ENCODE measurements at regions of chr18 and their contacts with region 1.

Region 1: GRCh38 chr18:59459369-59460079 is 100.5 kb upstream of the LMAN1 start:
- DNase-seq: no peak

Region 2: GRCh38 chr18:57975805-57976204 is 1483.7 kb before region 1 on chr18:
- intact Hi-C with region 1: loop called in 1 of 2 experiments (anchors 5 kb)
- DNase-seq: no peak

Region 3: DNA sequence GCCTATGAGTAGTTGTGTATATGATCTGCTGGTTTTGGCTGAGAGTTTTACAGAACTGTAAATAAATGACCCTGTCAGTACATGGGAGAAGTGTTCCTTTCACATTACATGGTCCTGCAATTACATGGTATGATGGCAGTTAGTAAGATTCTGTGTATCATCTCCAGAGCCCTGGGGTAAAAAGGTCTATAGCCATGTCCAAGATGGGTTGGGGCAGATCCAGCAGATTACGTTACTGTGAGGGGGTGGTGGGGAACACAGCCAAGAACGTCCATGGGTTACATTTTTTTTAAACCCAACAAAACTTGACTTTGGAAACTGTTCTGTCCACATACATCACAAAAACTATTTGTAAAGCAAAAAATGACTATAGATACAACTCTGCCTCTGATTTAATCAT is 36.3 kb before region 1 on chr18:
- intact Hi-C with region 1: no loop called
- DNase-seq: no peak

Region 4: GRCh38 chr18:59697236-59697932 is 237.9 kb after region 1 on chr18 and contains the start of gene CCBE1:
- intact Hi-C with region 1: loop called in 1 of 2 experiments (anchors 10 kb)
- DNase-seq: peak; percentile 85
- total RNA-seq, gene CCBE1: 2.1 to 3.0 TPM

Region 5: DNA sequence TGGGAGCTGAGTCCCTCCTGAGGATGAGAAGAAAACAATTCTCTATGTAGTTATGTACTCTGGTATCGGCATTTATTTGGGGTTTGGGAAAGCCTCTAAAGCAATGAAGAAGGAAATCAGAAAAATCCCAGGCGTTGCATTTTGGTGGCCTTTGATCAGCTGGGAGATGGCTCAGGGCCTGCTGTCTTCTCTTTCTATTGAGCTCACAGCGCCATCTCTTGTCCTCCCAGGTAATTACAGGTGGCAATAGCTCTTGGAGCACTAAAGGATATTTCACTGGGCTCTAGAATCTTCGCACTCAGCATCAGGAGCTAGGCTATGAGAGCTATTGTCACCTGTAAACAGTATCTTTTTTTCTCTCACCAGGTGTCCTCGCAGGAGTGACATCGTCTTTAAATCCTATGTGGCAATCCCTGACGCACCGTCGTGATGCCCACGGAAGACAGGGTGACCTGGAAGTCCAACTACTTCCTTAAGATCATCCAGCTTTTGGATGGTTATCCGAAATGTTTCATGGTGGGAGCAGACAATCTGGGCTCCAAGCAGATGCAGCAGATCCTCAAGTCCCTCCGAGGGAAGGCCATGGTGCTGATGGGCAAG is 364.2 kb after region 1 on chr18:
- intact Hi-C with region 1: loop called in 1 of 2 experiments (anchors 5 kb)
- DNase-seq: no peak